Tibial artery (tissue), 4 donors: ENCODE measurements at regions of chr12 and their contacts with region 1.

Region 1: DNA sequence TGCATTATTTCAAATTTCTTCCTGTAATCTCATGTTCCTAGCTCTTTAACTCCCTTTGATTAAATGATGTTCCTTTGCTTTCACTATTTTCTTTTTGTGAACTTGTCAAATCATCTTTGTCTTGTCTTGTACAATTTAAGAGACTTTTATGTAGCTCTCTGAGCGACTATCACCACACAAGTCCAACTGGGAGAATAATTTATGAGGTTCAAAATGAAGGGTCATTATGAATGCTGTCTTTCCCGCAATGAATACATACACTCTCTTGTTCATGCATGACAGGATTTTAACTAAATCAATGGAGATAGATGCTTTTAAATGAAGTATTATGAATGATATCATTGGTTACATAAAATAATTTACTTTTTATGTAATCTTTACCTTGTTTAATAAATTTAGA is 407.4 kb downstream of the PAWR start:
- DNase-seq: no peak
- H3K4me3 ChIP-seq: no peak overlapping the region
- H3K27ac ChIP-seq: no peak overlapping the region
- H3K4me1 ChIP-seq: no peaks in the 10 kb centered on the region
- H3K27me3 ChIP-seq: no peaks in the 10 kb centered on the region
- CTCF ChIP-seq: no peak

Region 2: DNA sequence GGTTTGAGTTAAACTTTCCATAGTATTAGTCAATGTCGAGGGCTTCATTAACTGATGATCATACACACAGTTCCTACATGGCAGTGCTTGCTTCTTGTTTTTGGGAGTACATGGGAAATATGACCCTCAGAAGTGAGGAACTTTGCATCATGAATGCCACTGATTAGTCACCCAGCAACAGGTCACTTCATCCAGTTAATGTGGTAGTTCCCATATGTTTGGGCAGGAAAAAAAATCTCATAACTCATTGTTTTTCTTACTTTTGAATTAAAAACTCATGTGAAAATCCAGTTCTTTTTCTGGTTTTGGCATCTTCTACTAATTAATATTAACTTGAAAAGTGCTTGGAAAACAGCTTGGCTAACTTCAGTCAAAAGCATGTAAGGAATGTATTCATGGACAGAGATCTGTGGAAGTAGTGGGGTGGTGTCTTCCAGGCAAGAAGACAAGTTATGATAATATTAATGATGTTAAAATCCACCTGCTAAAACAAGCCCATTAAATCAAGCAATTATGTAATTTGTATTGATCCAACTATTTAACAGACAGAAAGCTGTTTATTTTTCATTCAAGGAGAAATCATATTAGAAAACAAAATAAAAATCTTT is 1761.8 kb before region 1 on chr12:
- intact Hi-C with region 1: no loop called
- DNase-seq: no peak
- H3K4me3 ChIP-seq: no peak overlapping the region
- H3K27ac ChIP-seq: no peak overlapping the region
- H3K4me1 ChIP-seq: no peaks in the 10 kb centered on the region
- H3K27me3 ChIP-seq: no peaks in the 10 kb centered on the region
- CTCF ChIP-seq: no peak

Region 3: GRCh38 chr12:79238246-79238645 is 45.1 kb before region 1 on chr12:
- intact Hi-C with region 1: no loop called
- DNase-seq: no peak
- H3K4me3 ChIP-seq: no peak overlapping the region
- H3K27ac ChIP-seq: no peak overlapping the region
- H3K4me1 ChIP-seq: no peaks in the 10 kb centered on the region
- H3K27me3 ChIP-seq: no peaks in the 10 kb centered on the region
- CTCF ChIP-seq: no peak

Region 4: DNA sequence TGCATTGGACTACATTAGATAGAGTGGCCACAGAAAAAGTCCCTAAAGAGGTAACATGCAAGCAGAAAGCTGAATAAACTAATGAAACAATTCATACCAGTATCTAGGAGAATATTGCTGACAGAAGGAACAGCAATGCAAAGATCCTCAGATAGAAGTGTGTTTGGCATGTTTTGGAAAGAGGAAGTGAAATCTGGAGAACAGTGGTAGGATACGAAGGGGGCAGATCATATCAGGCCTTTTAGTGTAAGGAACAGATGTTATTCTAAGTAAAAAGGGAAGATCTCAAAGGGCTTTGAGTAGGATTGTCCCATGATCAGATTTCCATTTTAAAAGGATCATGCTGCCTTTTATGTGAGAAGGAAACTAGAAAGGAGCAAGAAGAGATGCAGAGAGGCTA is 64.5 kb after region 1 on chr12:
- intact Hi-C with region 1: loop called (anchors 2 kb)
- DNase-seq: no peak
- H3K4me3 ChIP-seq: no peak overlapping the region
- H3K27ac ChIP-seq: no peak overlapping the region
- H3K4me1 ChIP-seq: no peaks in the 10 kb centered on the region
- H3K27me3 ChIP-seq: no peaks in the 10 kb centered on the region
- CTCF ChIP-seq: no peak